T-cell (primary cell): ENCODE measurements at regions of chr15 and their contacts with region 1.

Region 1: GRCh38 chr15:40115670-40116093 is 7.0 kb upstream of the BMF start:
- DNase-seq: peak in 16 of 35 experiments; percentile 16 to 55 (median 26)
- ATAC-seq: peak; percentile 74 to 82 (median 78)
- H3K4me3 ChIP-seq: no peak overlapping the region
- H3K4me3 Mint-ChIP-seq: no peak overlapping the region
- H3K27ac ChIP-seq: no peak overlapping the region
- H3K27ac Mint-ChIP-seq: peak overlapping the region; percentile 80 to 88
- H3K4me1 ChIP-seq: peaks cover 2 to 7% of the 10 kb centered on the region in 2 experiments
- H3K4me1 Mint-ChIP-seq: peaks cover 12 to 14% (median 13%) of the 10 kb centered on the region in 3 donors
- H3K27me3 ChIP-seq: peaks cover 0 to 18% of the 10 kb centered on the region in 2 experiments
- H3K27me3 Mint-ChIP-seq: peaks cover 9 to 12% of the 10 kb centered on the region in 2 donors

Region 2: GRCh38 chr15:40104865-40105516 is 10.7 kb before region 1 on chr15:
- CTCF ChIA-PET with region 1: interaction called, 3 to 11 read pairs
- POLR2A ChIA-PET with region 1: no interaction called
- DNase-seq: peak; percentile 25 to 83 (median 61)
- ATAC-seq: peak; percentile 42 to 55 (median 45)
- H3K4me3 ChIP-seq: no peak overlapping the region
- H3K4me3 Mint-ChIP-seq: peak overlapping the region; percentile 61 to 79 (median 67)
- H3K27ac ChIP-seq: peak overlapping the region; percentile 9
- H3K27ac Mint-ChIP-seq: peak overlapping the region; percentile 70 to 83
- H3K4me1 ChIP-seq: peaks cover 34 to 80% of the 10 kb centered on the region in 2 experiments
- H3K4me1 Mint-ChIP-seq: peaks cover 54 to 69% (median 65%) of the 10 kb centered on the region in 3 donors
- H3K27me3 ChIP-seq: peaks cover 0 to 8% of the 10 kb centered on the region in 2 experiments
- H3K27me3 Mint-ChIP-seq: no peaks in the 10 kb centered on the region

Region 3: DNA sequence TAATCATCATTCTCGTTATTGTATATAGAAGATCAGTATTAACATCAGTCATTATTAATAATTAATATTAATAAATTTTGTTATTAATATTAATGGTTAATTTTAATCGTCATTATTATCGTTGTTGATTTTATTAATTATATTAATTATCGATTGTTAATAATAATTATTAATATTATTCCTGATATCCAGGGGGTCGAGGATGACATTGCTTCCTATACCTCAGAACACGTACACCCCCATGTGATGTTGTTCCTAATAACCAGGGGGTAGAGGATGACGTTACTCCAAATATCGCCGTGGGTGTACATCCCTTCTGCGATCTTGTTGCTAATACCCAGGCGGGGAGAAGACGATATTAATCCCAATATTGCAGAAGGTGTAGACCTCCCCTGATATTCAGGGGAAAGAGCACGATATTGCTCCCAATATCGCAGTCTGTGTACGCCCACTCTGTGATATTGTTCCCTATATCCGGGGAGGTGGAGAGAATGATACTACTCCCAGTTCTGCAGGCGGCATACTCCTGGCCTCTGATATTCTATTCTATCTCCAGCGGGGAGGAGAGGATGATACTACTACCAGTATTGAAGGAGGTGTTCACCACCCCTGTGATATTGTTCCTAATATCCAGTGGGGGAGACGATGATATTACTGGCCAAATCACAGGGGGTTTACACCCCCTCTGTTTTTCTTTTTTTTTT is 15.3 kb after region 1 on chr15:
- CTCF ChIA-PET with region 1: no interaction called
- POLR2A ChIA-PET with region 1: no interaction called
- DNase-seq: no peak
- ATAC-seq: peak in 2 of 4 experiments; percentile 5 to 28
- H3K4me3 ChIP-seq: no peak overlapping the region
- H3K4me3 Mint-ChIP-seq: no peak overlapping the region
- H3K27ac ChIP-seq: no peak overlapping the region
- H3K27ac Mint-ChIP-seq: peak overlapping the region in 1 of 2 donors; percentile 11
- H3K4me1 ChIP-seq: no peaks in the 10 kb centered on the region
- H3K4me1 Mint-ChIP-seq: no peaks in the 10 kb centered on the region
- H3K27me3 ChIP-seq: peaks cover 0 to 2% of the 10 kb centered on the region in 2 experiments
- H3K27me3 Mint-ChIP-seq: peaks cover 0 to 19% of the 10 kb centered on the region in 2 donors